Head of caudate nucleus (tissue), 42 donors: ENCODE measurements at regions of chr2 and their contacts with region 1.

Region 1: GRCh38 chr2:183124222-183124956 is at the start of gene NUP35:
- DNase-seq: peak; percentile 77 to 96 (median 90)

Region 2: GRCh38 chr2:183038341-183039300 is 85.8 kb before region 1 on chr2 and contains the start of gene NCKAP1:
- intact Hi-C with region 1: loop called (anchors 10 kb)
- DNase-seq: peak; percentile 53 to 94 (median 87)

Region 3: GRCh38 chr2:183078465-183079138 is 45.8 kb before region 1 on chr2 and contains the start of gene DUSP19:
- intact Hi-C with region 1: loop called (anchors 5 kb)
- DNase-seq: peak; percentile 70 to 97 (median 91)